ENCODE measurements at regions of chr15 and their contacts with region 1.

Region 1: DNA sequence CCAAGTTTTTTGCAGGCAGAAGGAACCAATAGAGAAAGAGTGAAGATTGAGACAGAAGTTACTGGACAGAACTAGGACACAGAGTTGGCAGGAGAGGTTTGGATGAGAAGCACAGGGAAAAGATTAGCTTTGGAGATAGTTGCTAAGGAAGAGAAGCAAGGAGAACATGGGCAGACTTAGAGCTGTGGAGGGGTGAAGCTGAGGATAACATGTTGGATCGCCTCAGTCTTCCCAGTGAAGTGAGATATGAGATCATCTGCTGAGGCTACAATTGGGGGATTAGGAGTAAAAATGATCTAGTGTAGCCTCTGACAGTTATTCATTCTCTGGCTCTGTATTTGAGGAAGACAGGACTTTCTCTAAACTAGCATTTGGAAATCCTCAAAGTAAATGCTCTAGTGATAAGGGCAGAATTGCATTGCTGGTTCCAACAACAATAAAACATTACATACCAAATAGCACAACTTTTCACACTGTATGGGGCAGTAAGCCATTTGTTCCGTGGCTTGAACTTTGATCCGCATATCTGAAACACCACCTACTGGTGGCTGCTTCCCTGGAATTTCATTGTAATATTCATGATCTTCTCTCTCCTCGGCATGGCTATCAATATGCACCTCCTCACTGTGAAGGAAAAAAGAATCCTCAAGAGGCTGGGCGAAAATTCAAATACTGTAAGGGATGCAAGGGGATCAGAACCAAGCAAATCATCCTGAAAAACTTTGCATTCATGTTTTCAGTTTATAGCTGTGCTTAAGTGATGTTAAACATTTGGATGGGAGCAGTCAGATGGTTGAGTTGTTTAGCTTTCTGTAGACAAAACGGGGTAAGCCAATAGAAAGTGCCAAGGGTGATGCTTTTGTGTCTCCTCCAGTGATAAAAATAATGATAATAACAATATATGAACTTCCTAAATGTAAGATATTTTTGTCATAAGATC is 22.2 kb upstream of the EID1 start:
- DNase-seq: peak; percentile 54
- ATAC-seq: peak; percentile 45
- H3K4me3 ChIP-seq: no peak overlapping the region
- H3K27ac ChIP-seq: no peak overlapping the region
- H3K4me1 ChIP-seq: peaks cover 31% of the 10 kb centered on the region
- H3K27me3 ChIP-seq: no peaks in the 10 kb centered on the region
- CTCF ChIP-seq: peak; percentile 67

Region 2: GRCh38 chr15:48358229-48358641 is 497.5 kb before region 1 on chr15:
- CTCF ChIA-PET with region 1: no interaction called
- POLR2A ChIA-PET with region 1: no interaction called
- intact Hi-C with region 1: loop called (anchors 2 kb)
- DNase-seq: peak; percentile 49
- ATAC-seq: peak; percentile 73
- H3K4me3 ChIP-seq: peak overlapping the region; percentile 32; the same call in 1 of the 2 replicates
- H3K27ac ChIP-seq: peak overlapping the region; percentile 68
- H3K4me1 ChIP-seq: peaks cover 13% of the 10 kb centered on the region
- H3K27me3 ChIP-seq: no peaks in the 10 kb centered on the region
- CTCF ChIP-seq: peak; percentile 78

Region 3: DNA sequence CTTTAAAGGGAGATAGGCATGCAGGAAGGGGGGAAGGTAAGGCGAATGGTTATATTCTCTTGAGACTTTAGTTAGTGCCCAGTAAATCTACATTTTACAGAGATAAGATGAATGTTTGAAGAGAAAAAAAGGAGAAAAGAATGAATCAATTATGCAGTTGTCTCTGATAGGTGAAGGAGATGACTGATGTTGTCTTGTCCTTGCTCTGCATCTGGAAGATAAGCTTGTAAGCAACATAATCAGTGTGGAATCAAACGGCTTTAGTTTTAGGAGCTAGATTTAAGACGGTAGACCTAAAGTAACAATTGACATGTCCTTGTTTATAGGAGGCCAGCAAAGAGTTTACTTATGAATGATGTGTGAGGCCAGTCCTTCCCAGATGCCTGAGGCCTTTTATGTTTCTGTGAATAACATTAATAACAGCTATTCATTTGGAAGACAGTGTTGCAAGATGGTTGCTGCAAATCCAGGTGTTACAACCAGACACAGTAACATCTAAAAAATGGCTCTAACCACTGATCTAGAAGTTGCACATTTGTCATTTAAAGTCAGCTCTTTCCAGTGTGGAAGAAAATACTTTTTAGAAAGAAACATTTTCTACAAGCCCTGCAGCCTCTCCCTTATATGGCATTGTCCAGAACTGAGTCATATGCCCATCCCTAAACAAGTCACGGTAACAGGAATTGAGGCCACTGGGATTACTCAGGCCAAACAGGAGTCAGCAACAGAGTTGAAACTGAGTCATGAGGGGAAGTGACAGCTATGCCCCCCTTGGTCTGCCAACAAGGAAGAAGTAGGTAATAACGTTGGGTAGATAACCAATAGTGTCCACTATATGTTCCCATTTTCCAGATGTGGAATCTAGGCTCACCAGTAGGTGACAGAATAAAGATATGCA is 132.8 kb before region 1 on chr15:
- CTCF ChIA-PET with region 1: interaction called, 3 read pairs
- POLR2A ChIA-PET with region 1: no interaction called
- intact Hi-C with region 1: loop called (anchors 2 kb)
- DNase-seq: peak; percentile 93
- ATAC-seq: peak; percentile 97
- H3K4me3 ChIP-seq: peak overlapping the region; percentile 39; the same call in 1 of the 2 replicates
- H3K27ac ChIP-seq: peak overlapping the region; percentile 99
- H3K4me1 ChIP-seq: peaks cover 28% of the 10 kb centered on the region
- H3K27me3 ChIP-seq: no peaks in the 10 kb centered on the region
- CTCF ChIP-seq: peak; percentile 35; the same call in 1 of the 2 replicates

Region 4: DNA sequence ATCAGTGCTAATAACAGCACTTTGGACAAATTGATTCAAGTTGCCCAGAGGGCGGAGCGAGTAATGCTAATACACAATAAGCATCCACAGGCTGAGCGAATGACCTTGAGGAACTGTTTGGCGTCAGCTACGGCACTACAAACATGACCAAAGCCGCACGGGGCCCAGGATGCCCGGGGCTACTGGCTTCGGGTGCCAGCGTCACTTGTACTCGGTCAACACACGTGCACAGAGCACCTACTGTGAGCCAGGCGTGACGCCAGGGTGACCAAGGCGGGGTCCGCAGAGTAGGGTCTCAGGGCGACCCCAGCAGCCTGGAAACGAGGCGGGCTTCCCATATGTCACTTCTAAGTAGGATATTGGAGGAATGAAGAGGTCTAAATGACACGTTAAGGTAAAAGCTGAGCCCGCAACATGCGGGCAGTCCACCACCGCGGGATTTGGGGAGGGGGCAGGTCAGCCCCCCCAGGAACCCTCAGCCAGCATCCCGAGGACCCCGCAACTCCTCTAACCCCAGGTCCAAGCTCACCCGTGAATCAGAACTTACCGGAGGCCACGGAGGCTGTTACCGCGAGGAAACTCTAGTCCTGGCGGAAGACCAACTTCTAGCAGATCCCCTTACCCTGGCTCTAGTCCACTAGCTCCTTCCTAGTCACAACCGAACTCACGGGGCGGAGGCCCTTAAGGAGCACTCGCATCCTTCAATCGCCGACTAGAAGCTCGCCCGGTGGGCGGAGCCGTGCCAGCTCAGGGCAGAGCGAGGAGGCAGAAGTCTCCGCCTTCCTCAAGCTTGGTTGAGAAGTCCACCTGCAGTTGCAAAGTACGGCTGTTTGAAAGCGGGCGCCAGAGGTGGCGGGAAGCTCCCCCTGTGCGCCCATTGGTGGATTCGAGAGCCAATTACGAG is 45.1 kb before region 1 on chr15 and contains the start of gene CEP152:
- CTCF ChIA-PET with region 1: interaction called, 3 read pairs
- POLR2A ChIA-PET with region 1: interaction called, 3 read pairs
- intact Hi-C with region 1: loop called (anchors 5 kb)
- DNase-seq: peak; percentile 98
- ATAC-seq: peak; percentile 96
- H3K4me3 ChIP-seq: peak within 1 kb of the TSS; percentile 83
- H3K27ac ChIP-seq: peak within 1 kb of the TSS; percentile 68
- H3K4me1 ChIP-seq: peaks cover 15% of the 10 kb centered on the region
- H3K27me3 ChIP-seq: no peaks in the 10 kb centered on the region
- CTCF ChIP-seq: no peak
- total RNA-seq, gene CEP152: 7.5 and 8.2 TPM in 2 replicates

Measured in PC-3 (cell line).